ENCODE measurements at regions of chr17 and their contacts with region 1.

Region 1: GRCh38 chr17:5065227-5065744 is 13.0 kb upstream of the ZFP3 start:
- H3K4me3 Mint-ChIP-seq: no peak overlapping the region
- H3K27ac Mint-ChIP-seq: no peak overlapping the region
- H3K4me1 Mint-ChIP-seq: peaks cover 14% of the 10 kb centered on the region
- H3K27me3 Mint-ChIP-seq: peaks cover 27% of the 10 kb centered on the region

Region 2: GRCh38 chr17:4908301-4908700 is 157.0 kb before region 1 on chr17:
- intact Hi-C with region 1: loop called (anchors 1 kb)
- H3K4me3 Mint-ChIP-seq: no peak overlapping the region
- H3K27ac Mint-ChIP-seq: no peak overlapping the region
- H3K4me1 Mint-ChIP-seq: peaks cover 4% of the 10 kb centered on the region
- H3K27me3 Mint-ChIP-seq: peaks cover 22% of the 10 kb centered on the region

Region 3: GRCh38 chr17:4980644-4981216 is 84.6 kb before region 1 on chr17:
- intact Hi-C with region 1: loop called (anchors 2 kb)
- H3K4me3 Mint-ChIP-seq: no peak overlapping the region
- H3K27ac Mint-ChIP-seq: peak overlapping the region; percentile 71
- H3K4me1 Mint-ChIP-seq: peaks cover 65% of the 10 kb centered on the region
- H3K27me3 Mint-ChIP-seq: no peaks in the 10 kb centered on the region

Region 4: DNA sequence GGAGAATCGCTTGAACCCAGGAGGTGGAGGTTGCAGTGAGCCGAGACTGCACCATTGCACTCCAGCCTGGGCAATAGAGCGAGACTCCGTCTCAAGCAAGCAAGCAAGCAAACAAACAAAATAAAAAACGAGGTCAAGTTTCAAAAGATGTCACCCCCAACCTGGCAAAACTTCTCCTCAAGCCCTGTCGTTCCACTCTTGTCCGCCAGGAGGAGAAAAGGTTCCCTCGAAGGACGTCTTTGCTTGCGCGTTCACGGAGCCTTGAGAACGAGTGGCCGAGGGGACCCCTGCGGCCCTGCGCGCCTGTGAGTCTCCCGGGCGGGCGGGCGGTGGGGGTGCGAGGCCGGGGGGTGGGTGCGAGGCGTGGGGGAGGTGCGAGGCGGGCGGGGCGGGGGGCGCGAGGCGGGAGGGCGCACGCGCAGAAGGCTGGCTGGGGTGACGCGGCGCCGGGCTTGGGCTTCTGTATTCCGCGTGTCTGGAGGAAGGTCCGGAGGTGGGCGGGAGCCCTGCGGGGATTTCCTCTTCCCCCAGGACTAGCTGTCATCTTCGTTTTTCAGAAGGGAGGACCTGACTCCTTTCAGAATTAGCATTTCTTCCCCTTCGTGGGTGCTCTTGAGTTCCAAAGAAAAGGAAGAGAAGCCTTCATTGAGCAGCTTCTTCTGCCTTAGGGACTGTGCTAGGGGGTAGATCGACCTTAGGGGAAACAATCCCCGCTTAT is 33.8 kb before region 1 on chr17:
- intact Hi-C with region 1: loop called (anchors 1 kb)
- H3K4me3 Mint-ChIP-seq: peak overlapping the region; percentile 72
- H3K27ac Mint-ChIP-seq: peak overlapping the region; percentile 97
- H3K4me1 Mint-ChIP-seq: peaks cover 54% of the 10 kb centered on the region
- H3K27me3 Mint-ChIP-seq: peaks cover 23% of the 10 kb centered on the region

Region 5: GRCh38 chr17:5099271-5099670 is 34.0 kb after region 1 on chr17:
- intact Hi-C with region 1: no loop called
- H3K4me3 Mint-ChIP-seq: no peak overlapping the region
- H3K27ac Mint-ChIP-seq: no peak overlapping the region
- H3K4me1 Mint-ChIP-seq: peaks cover 18% of the 10 kb centered on the region
- H3K27me3 Mint-ChIP-seq: peaks cover 61% of the 10 kb centered on the region

Measured in dendritic cell treated with granulocyte-macrophage colony-stimulating factor and Interleukin-4, amounts not matched to agents 40 ng/mL and 50 ng/mL, for 4 days (primary cell).